Caco-2 (cell line): ENCODE measurements at regions of chr22 and their contacts with region 1.

Region 1: DNA sequence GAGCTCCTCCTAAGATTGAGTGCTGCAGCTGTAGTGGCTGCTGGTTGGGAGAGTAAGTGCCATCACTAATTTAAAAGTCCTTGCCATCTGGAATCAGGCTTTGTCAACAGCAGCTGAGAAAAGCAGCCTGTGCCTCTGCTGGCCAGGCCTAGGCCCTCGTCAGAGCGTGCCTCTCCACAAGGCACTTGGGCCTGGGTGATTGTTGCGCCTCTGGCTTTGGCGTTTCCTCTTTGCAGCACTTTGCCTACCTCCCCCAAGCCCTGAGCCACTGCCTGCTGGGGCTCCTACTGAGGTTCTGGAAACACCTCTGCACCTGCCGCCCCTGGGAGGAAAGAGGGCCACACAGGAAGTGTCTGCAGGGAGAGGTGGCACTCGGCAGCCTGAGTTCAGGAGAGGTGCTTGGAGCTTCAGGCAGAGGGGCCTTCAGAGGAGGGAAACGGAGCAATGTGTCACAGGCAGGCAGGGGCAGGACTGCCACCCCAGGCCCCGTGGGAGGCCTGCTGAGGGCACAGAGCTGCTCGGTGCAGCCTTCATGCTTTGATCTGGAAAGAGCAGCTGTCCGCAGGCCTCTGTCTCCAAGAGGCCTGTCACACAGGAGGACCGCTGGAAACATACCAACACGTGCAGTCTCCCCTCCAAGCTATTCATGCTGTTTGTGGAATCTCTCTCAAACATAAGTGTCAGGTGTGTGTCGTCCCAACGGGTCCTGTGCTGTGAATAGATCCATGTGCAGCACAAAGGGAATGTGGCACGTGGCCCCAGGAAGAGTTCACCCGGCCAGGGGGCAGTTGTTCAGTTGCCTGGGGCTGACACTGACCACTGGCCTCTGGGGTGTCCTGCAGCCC is 61.5 kb upstream of the EMID1 start:
- DNase-seq: peak in 1 of 2 experiments; percentile 22
- H3K4me3 ChIP-seq: no peak overlapping the region
- H3K4me3 Mint-ChIP-seq: no peak overlapping the region
- H3K27ac Mint-ChIP-seq: no peak overlapping the region
- H3K4me1 ChIP-seq: peaks cover 8% of the 10 kb centered on the region
- H3K4me1 Mint-ChIP-seq: peaks cover 2% of the 10 kb centered on the region
- H3K27me3 ChIP-seq: no peaks in the 10 kb centered on the region
- H3K27me3 Mint-ChIP-seq: no peaks in the 10 kb centered on the region
- CTCF ChIP-seq: no peak

Region 2: GRCh38 chr22:28951969-28952521 is 192.1 kb before region 1 on chr22:
- CTCF ChIA-PET with region 1: no interaction called
- POLR2A ChIA-PET with region 1: no interaction called
- intact Hi-C with region 1: no loop called
- DNase-seq: peak; percentile 75 to 78
- H3K4me3 ChIP-seq: no peak overlapping the region
- H3K4me3 Mint-ChIP-seq: peak overlapping the region; percentile 28
- H3K27ac Mint-ChIP-seq: peak overlapping the region; percentile 91
- H3K4me1 ChIP-seq: peaks cover 63% of the 10 kb centered on the region
- H3K4me1 Mint-ChIP-seq: peaks cover 48% of the 10 kb centered on the region
- H3K27me3 ChIP-seq: no peaks in the 10 kb centered on the region
- H3K27me3 Mint-ChIP-seq: no peaks in the 10 kb centered on the region
- CTCF ChIP-seq: peak in 1 of 2 experiments; percentile 62

Region 3: GRCh38 chr22:29193021-29193420 is 48.9 kb after region 1 on chr22:
- CTCF ChIA-PET with region 1: interaction called, 10 read pairs
- POLR2A ChIA-PET with region 1: no interaction called
- intact Hi-C with region 1: no loop called
- DNase-seq: no peak
- H3K4me3 ChIP-seq: no peak overlapping the region
- H3K4me3 Mint-ChIP-seq: no peak overlapping the region
- H3K27ac Mint-ChIP-seq: no peak overlapping the region
- H3K4me1 ChIP-seq: no peaks in the 10 kb centered on the region
- H3K4me1 Mint-ChIP-seq: no peaks in the 10 kb centered on the region
- H3K27me3 ChIP-seq: no peaks in the 10 kb centered on the region
- H3K27me3 Mint-ChIP-seq: no peaks in the 10 kb centered on the region
- CTCF ChIP-seq: no peak